ENCODE measurements at regions of chr12 and their contacts with region 1.

Region 1: DNA sequence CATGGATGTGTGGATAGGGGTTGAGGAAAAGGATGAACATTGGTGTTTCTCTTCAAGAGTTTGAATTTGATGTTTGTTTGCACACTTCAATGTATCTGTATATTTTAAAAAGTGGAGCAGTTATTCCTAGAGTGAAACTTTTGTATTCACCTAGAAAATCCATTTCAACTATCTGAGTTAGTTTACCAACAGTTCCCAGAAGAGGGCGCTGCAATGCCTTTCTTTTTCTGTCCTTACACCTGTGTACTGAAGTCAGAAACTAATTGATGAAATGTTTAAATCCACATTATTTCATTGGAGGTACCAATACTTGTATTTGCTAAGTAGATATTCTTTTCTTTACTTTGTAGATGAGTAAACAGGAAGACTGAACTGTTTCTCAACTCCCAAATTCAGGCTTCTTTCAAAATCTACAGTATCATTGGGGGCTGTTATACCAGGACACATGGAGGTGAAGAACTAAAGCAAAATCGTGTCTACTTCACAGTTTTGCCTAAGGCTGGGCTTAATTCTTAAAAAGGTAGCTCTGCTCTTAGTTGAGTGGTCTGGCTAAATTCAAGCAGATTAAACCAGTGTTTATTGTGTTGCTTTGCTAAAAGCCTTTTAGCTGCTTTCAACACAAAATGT is 26.6 kb upstream of the KLRB1 start:
- DNase-seq: peak; percentile 39
- H3K4me3 ChIP-seq: no peak overlapping the region
- H3K27ac ChIP-seq: no peak overlapping the region
- H3K4me1 ChIP-seq: peaks cover 28% of the 10 kb centered on the region
- H3K27me3 ChIP-seq: no peaks in the 10 kb centered on the region
- CTCF ChIP-seq: peak; percentile 62 to 70

Region 2: GRCh38 chr12:9378430-9378835 is 255.9 kb before region 1 on chr12:
- CTCF ChIA-PET with region 1: no interaction called
- dilution Hi-C with region 1: no loop called
- in situ Hi-C with region 1: no loop called
- intact Hi-C with region 1: loop called (anchors 5 kb)
- DNase-seq: no peak
- H3K4me3 ChIP-seq: no peak overlapping the region
- H3K27ac ChIP-seq: no peak overlapping the region
- H3K4me1 ChIP-seq: no peaks in the 10 kb centered on the region
- H3K27me3 ChIP-seq: peaks cover 2% of the 10 kb centered on the region
- CTCF ChIP-seq: peak; percentile 45 to 69

Region 3: DNA sequence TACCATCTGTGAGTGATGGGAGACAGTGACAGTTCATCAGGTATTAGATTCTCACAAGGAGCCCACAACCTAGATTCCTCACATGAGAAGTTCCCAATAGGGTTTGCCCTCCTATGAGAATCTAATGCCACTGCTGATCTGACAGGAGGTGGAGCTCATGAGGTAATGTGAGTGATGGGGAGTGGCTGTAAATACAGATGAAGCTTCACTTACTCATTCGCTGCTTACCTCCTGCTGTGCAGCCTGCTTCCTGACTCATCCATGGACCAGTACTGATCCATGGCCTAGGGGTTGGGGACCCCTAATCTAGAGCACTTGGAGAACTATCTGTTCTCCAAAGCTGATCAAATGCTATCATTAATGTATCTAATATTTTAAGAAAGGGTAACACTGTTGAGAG is 52.9 kb after region 1 on chr12:
- CTCF ChIA-PET with region 1: no interaction called
- dilution Hi-C with region 1: no loop called
- in situ Hi-C with region 1: no loop called
- intact Hi-C with region 1: no loop called
- DNase-seq: no peak
- H3K4me3 ChIP-seq: no peak overlapping the region
- H3K27ac ChIP-seq: no peak overlapping the region
- H3K4me1 ChIP-seq: no peaks in the 10 kb centered on the region
- H3K27me3 ChIP-seq: no peaks in the 10 kb centered on the region
- CTCF ChIP-seq: no peak

Region 4: GRCh38 chr12:9707864-9708808 is 73.8 kb after region 1 on chr12:
- CTCF ChIA-PET with region 1: interaction called, 5 read pairs
- dilution Hi-C with region 1: loop called (anchors 5 kb)
- in situ Hi-C with region 1: loop called (anchors 10 kb)
- intact Hi-C with region 1: loop called (anchors 1 kb)
- DNase-seq: peak; percentile 29
- H3K4me3 ChIP-seq: no peak overlapping the region
- H3K27ac ChIP-seq: no peak overlapping the region
- H3K4me1 ChIP-seq: peaks cover 4% of the 10 kb centered on the region
- H3K27me3 ChIP-seq: no peaks in the 10 kb centered on the region
- CTCF ChIP-seq: peak; percentile 78 to 82

Region 5: DNA sequence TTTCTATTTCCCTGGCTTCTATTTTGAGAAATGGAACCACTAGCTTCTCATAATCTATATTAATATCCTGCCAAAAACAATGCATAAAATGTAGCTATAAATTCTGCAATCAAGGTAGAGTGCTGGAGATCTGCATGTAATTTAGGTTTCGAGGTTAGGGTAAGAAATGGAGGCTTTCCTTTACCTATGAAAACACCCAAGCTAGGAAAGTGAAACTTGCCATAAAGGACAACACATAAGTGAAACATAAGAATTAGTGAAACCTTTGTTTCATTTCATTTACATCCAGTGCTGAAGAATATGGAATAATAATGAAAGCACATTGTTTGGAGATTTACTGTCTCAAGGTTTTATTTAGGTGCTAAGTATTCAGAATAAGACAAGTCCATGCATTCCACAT is 288.1 kb after region 1 on chr12:
- CTCF ChIA-PET with region 1: no interaction called
- dilution Hi-C with region 1: no loop called
- in situ Hi-C with region 1: no loop called
- intact Hi-C with region 1: no loop called
- DNase-seq: no peak
- H3K4me3 ChIP-seq: no peak overlapping the region
- H3K27ac ChIP-seq: no peak overlapping the region
- H3K4me1 ChIP-seq: no peaks in the 10 kb centered on the region
- H3K27me3 ChIP-seq: no peaks in the 10 kb centered on the region
- CTCF ChIP-seq: no peak